ENCODE measurements at regions of chr1 and their contacts with region 1.

Region 1: GRCh38 chr1:226827968-226828513 is 42.4 kb upstream of the PSEN2 start:
- DNase-seq: peak; percentile 82 to 94 (median 91)
- ATAC-seq: peak; percentile 99
- H3K4me3 ChIP-seq: peak overlapping the region; percentile 34
- H3K4me3 Mint-ChIP-seq: peak overlapping the region; percentile 35 to 79 (median 66)
- H3K27ac ChIP-seq: peak overlapping the region; percentile 59
- H3K27ac Mint-ChIP-seq: peak overlapping the region; percentile 80 to 95 (median 87)
- H3K4me1 ChIP-seq: peaks cover 9 to 11% of the 10 kb centered on the region in 2 donors
- H3K4me1 Mint-ChIP-seq: peaks cover 24 to 54% (median 45%) of the 10 kb centered on the region in 7 donors
- H3K27me3 ChIP-seq: no peaks in the 10 kb centered on the region
- H3K27me3 Mint-ChIP-seq: peaks cover 0 to 4% (median 0%) of the 10 kb centered on the region in 5 donors

Region 2: DNA sequence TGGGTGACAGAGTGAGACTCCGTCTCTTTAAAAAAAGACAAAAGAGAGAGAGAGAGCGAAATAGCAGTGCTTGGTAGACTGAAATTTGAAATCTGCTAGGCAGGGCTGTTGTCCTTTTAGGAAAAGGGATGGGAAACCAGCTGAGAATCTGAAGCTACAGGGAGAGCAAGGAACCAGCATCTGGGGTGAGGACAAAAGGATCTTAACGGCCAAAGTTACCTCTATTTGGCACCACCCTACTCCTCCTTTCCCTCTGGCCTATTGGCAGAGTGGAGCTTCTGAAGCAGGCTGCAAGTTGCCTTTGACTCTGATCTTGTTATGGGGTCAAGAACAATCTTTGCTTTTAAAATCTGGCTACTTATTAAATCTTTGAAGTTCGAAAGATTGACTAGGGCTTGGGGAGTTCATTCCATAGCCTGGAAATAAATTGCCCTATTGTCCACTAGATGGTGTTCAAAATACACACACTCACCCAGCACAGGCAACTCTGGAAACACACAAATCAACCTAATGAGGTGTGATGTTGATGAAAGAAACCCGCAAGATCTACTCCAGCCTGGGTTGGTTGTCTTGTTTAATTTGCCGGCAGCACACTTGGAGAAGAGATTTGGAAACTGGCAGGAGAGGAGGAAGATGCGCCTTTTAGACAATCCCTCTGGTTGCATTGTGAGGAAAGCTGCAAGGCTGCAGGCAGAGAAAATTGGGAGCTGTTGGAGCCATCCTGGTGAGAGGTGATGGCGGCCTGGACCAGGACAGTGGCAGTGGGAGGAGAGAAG is 403.6 kb before region 1 on chr1:
- CTCF ChIA-PET with region 1: interaction called, 3 read pairs
- POLR2A ChIA-PET with region 1: no interaction called
- intact Hi-C with region 1: loop called in 1 of 2 experiments (anchors 1 kb)
- DNase-seq: peak in 5 of 9 donors; percentile 29 to 54 (median 44)
- ATAC-seq: peak; percentile 68
- H3K4me3 ChIP-seq: peak overlapping the region; percentile 33
- H3K4me3 Mint-ChIP-seq: peak overlapping the region in 1 of 10 donors; percentile 21
- H3K27ac ChIP-seq: no peak overlapping the region
- H3K27ac Mint-ChIP-seq: no peak overlapping the region
- H3K4me1 ChIP-seq: peaks cover 11% of the 10 kb centered on the region in 2 donors
- H3K4me1 Mint-ChIP-seq: peaks cover 15 to 34% (median 21%) of the 10 kb centered on the region in 7 donors
- H3K27me3 ChIP-seq: no peaks in the 10 kb centered on the region
- H3K27me3 Mint-ChIP-seq: peaks cover 0 to 8% (median 0%) of the 10 kb centered on the region in 5 donors

Region 3: GRCh38 chr1:226626577-226626956 is 201.5 kb before region 1 on chr1:
- CTCF ChIA-PET with region 1: interaction called, 34 read pairs
- POLR2A ChIA-PET with region 1: interaction called, 4 read pairs
- intact Hi-C with region 1: loop called (anchors 1 kb)
- DNase-seq: peak; percentile 62 to 85 (median 76)
- ATAC-seq: peak; percentile 97
- H3K4me3 ChIP-seq: peak overlapping the region; percentile 25
- H3K4me3 Mint-ChIP-seq: peak overlapping the region; percentile 29 to 72 (median 56)
- H3K27ac ChIP-seq: no peak overlapping the region
- H3K27ac Mint-ChIP-seq: peak overlapping the region in 7 of 9 donors; percentile 43 to 85 (median 67)
- H3K4me1 ChIP-seq: peaks cover 8 to 10% of the 10 kb centered on the region in 2 donors
- H3K4me1 Mint-ChIP-seq: peaks cover 9 to 33% (median 27%) of the 10 kb centered on the region in 7 donors
- H3K27me3 ChIP-seq: no peaks in the 10 kb centered on the region
- H3K27me3 Mint-ChIP-seq: peaks cover 0 to 8% (median 0%) of the 10 kb centered on the region in 5 donors

Region 4: DNA sequence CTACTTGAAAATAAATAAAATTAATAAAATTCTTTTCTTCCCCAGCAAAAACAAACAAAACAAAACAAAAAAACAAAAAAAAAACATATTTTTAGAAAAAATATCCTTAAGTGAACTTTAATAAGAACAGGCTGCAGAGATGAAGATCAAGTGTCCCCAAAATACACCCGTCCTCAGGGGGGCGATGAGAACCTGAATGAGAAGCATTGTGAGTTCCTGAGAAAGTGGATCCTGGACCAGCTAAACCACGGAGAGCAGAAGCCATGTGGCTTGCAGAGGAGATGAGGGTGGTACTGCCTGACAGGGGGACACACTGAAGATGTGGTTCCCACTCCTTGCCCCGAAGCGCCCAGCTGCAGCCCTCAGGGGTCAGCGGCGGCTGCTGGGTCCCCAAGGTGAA is 178.3 kb before region 1 on chr1:
- CTCF ChIA-PET with region 1: interaction called, 28 read pairs
- POLR2A ChIA-PET with region 1: interaction called, 7 read pairs
- intact Hi-C with region 1: loop called in 1 of 2 experiments (anchors 1 kb)
- DNase-seq: peak in 6 of 9 donors; percentile 48 to 58 (median 54)
- ATAC-seq: no peak
- H3K4me3 ChIP-seq: no peak overlapping the region
- H3K4me3 Mint-ChIP-seq: peak overlapping the region in 5 of 10 donors; percentile 15 to 50 (median 17)
- H3K27ac ChIP-seq: no peak overlapping the region
- H3K27ac Mint-ChIP-seq: no peak overlapping the region
- H3K4me1 ChIP-seq: peaks cover 23 to 51% of the 10 kb centered on the region in 2 donors
- H3K4me1 Mint-ChIP-seq: peaks cover 0 to 83% (median 63%) of the 10 kb centered on the region in 7 donors
- H3K27me3 ChIP-seq: no peaks in the 10 kb centered on the region
- H3K27me3 Mint-ChIP-seq: no peaks in the 10 kb centered on the region

Region 5: GRCh38 chr1:226702957-226703831 is 124.8 kb before region 1 on chr1:
- CTCF ChIA-PET with region 1: interaction called, 3 read pairs
- POLR2A ChIA-PET with region 1: no interaction called
- intact Hi-C with region 1: loop called in 1 of 2 experiments (anchors 1 kb)
- DNase-seq: peak; percentile 79 to 93 (median 86)
- ATAC-seq: peak; percentile 92
- H3K4me3 ChIP-seq: peak overlapping the region; percentile 69
- H3K4me3 Mint-ChIP-seq: peak overlapping the region; percentile 81 to 92 (median 86)
- H3K27ac ChIP-seq: peak overlapping the region; percentile 93
- H3K27ac Mint-ChIP-seq: peak overlapping the region; percentile 89 to 99 (median 95)
- H3K4me1 ChIP-seq: peaks cover 42 to 85% of the 10 kb centered on the region in 2 donors
- H3K4me1 Mint-ChIP-seq: peaks cover 59 to 95% (median 81%) of the 10 kb centered on the region in 7 donors
- H3K27me3 ChIP-seq: no peaks in the 10 kb centered on the region
- H3K27me3 Mint-ChIP-seq: no peaks in the 10 kb centered on the region

Region 6: GRCh38 chr1:228734881-228735801 is 1907.1 kb after region 1 on chr1 and contains the start of gene RHOU:
- CTCF ChIA-PET with region 1: no interaction called
- POLR2A ChIA-PET with region 1: no interaction called
- intact Hi-C with region 1: no loop called
- DNase-seq: peak; percentile 44 to 80 (median 71)
- ATAC-seq: peak; percentile 92
- H3K4me3 ChIP-seq: peak within 1 kb of the TSS; percentile 70
- H3K4me3 Mint-ChIP-seq: peak within 1 kb of the TSS; percentile 80 to 94 (median 90)
- H3K27ac ChIP-seq: peak within 1 kb of the TSS; percentile 27
- H3K27ac Mint-ChIP-seq: peak within 1 kb of the TSS; percentile 10 to 64 (median 45)
- H3K4me1 ChIP-seq: peaks cover 0 to 7% of the 10 kb centered on the region in 2 donors
- H3K4me1 Mint-ChIP-seq: peaks cover 9 to 34% (median 14%) of the 10 kb centered on the region in 7 donors
- H3K27me3 ChIP-seq: no peaks in the 10 kb centered on the region
- H3K27me3 Mint-ChIP-seq: peaks cover 0 to 52% (median 13%) of the 10 kb centered on the region in 5 donors
- total RNA-seq, gene RHOU: 1.3 to 6.5 (median 1.8) TPM